A549 (cell line): ENCODE measurements at regions of chr4 and their contacts with region 1.

Region 1: GRCh38 chr4:105146276-105147015 is at the start of gene TET2:
- DNase-seq: peak; percentile 22 to 79
- ATAC-seq: peak; percentile 90
- H3K4me3 ChIP-seq: peak within 1 kb of the TSS; percentile 68
- H3K27ac ChIP-seq: peak within 1 kb of the TSS; percentile 92 to 96
- H3K4me1 ChIP-seq: peaks cover 21% of the 10 kb centered on the region
- CTCF ChIP-seq: no peak
- EP300 ChIP-seq: no peak
- POLR2A ChIP-seq: peak; percentile 43
- RAD21 ChIP-seq: no peak
- polyA plus RNA-seq, gene TET2: 6.6 and 7.1 TPM in 2 replicates

Region 2: DNA sequence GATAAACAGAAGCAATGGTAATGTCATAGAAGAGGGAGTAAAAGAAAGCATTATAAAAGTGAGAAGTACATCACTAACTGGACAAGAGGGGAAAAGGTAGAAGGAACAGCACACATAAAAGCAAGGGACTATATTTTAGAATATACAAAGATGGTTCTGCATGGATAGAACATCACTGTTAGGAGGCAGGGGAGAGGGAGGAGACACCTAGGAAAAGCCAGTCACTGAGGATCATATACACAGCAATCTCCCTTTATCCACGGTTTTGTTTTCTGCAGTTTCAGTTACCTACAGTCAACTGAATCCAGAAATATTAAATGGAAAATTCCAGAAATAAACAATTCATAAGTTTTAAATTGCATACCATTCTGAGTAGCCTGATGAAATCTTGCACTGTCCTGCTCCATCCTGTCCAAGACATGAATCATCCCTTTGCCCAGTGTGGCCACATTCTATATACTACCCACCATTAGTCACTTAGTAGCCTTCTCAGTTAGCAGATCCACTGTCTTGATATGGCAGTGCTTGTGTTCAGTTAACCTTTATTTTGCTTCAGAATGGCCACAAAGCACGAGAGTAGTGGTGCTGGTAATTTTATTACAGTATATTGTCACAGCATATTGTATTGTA is 253.2 kb after region 1 on chr4:
- CTCF ChIA-PET with region 1: no interaction called
- POLR2A ChIA-PET with region 1: no interaction called
- DNase-seq: peak in 1 of 2 experiments; percentile 13
- ATAC-seq: peak; percentile 83 to 94
- H3K4me3 ChIP-seq: no peak overlapping the region
- H3K27ac ChIP-seq: peak overlapping the region; percentile 3 to 68; a peak in 3 of 6 replicates
- H3K4me1 ChIP-seq: peaks cover 11% of the 10 kb centered on the region; the same call in 2 of the 3 replicates
- CTCF ChIP-seq: no peak
- EP300 ChIP-seq: no peak
- POLR2A ChIP-seq: no peak
- RAD21 ChIP-seq: no peak

Region 3: DNA sequence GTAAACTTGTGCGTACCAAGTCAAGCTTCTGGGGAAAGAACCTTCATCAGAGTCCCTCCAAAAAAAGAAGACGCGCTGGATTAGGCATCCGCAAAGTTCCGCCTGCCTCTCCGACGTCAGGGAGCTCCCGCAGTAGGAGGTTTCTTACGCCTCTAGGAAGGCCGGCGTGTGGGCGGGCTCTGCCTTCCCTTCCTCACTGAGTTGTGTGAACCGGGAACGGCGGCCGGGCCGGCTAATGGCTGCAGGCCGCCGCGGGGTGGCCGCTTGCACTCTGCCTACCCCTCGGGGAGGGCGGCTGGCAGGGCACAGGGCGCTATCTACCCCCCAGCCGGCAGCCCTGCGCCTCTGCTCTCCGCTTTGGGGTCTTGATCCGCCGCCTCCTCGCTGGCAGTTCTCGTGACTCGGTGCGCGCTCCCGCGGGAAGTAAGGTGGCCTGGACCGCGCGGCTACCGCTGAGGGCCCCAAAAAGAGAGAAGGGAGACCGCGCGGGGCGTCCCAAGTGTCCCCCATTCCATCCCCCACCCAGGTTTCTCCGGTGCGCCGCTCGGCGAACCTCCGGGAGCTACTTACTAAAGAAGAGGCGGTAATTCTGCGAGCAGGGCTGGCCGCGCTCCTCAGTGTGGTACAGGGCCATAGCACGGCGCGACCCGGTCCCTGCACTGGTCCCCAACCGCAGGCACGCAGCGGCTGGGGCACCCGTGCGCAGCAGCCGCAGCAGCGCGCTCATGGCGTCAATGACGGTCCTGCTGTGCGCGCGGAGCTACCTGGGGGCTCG is 327.1 kb after region 1 on chr4 and contains the start of gene PPA2:
- CTCF ChIA-PET with region 1: interaction called, 10 read pairs
- POLR2A ChIA-PET with region 1: interaction called, 9 read pairs
- DNase-seq: peak; percentile 43 to 85
- ATAC-seq: peak; percentile 93 to 94
- H3K4me3 ChIP-seq: peak within 1 kb of the TSS; percentile 78
- H3K27ac ChIP-seq: peak within 1 kb of the TSS; percentile 93 to 99
- H3K4me1 ChIP-seq: peaks cover 14% of the 10 kb centered on the region
- CTCF ChIP-seq: peak; percentile 60; the same call in 2 of the 3 replicates
- EP300 ChIP-seq: no peak
- POLR2A ChIP-seq: peak; percentile 83
- RAD21 ChIP-seq: no peak; a peak in 1 of 5 replicates
- polyA plus RNA-seq, gene PPA2: 125 and 140 TPM in 2 replicates